ENCODE measurements at regions of chr6 and their contacts with region 1.

Region 1: GRCh38 chr6:52284460-52285176 is at the start of gene MCM3:
- DNase-seq: peak; percentile 86 to 99 (median 92)
- ATAC-seq: peak; percentile 92
- H3K4me3 ChIP-seq: peak within 1 kb of the TSS; percentile 57
- H3K4me3 Mint-ChIP-seq: peak within 1 kb of the TSS; percentile 60
- H3K27ac ChIP-seq: peak within 1 kb of the TSS; percentile 51 to 59
- H3K27ac Mint-ChIP-seq: peak within 1 kb of the TSS; percentile 34
- H3K4me1 ChIP-seq: peaks cover 29% of the 10 kb centered on the region
- H3K4me1 Mint-ChIP-seq: peaks cover 49% of the 10 kb centered on the region
- H3K27me3 ChIP-seq: no peaks in the 10 kb centered on the region
- H3K27me3 Mint-ChIP-seq: no peaks in the 10 kb centered on the region
- CTCF ChIP-seq: no peak
- total RNA-seq, gene MCM3: 9.3 to 10.1 TPM

Region 2: GRCh38 chr6:52299653-52300052 is 15.0 kb after region 1 on chr6:
- CTCF ChIA-PET with region 1: interaction called, 9 read pairs
- POLR2A ChIA-PET with region 1: interaction called, 16 read pairs
- intact Hi-C with region 1: loop called (anchors 2 kb)
- DNase-seq: no peak
- ATAC-seq: no peak
- H3K4me3 ChIP-seq: no peak overlapping the region
- H3K4me3 Mint-ChIP-seq: no peak overlapping the region
- H3K27ac ChIP-seq: no peak overlapping the region
- H3K27ac Mint-ChIP-seq: no peak overlapping the region
- H3K4me1 ChIP-seq: peaks cover 54% of the 10 kb centered on the region
- H3K4me1 Mint-ChIP-seq: peaks cover 66% of the 10 kb centered on the region
- H3K27me3 ChIP-seq: no peaks in the 10 kb centered on the region
- H3K27me3 Mint-ChIP-seq: no peaks in the 10 kb centered on the region
- CTCF ChIP-seq: no peak

Region 3: DNA sequence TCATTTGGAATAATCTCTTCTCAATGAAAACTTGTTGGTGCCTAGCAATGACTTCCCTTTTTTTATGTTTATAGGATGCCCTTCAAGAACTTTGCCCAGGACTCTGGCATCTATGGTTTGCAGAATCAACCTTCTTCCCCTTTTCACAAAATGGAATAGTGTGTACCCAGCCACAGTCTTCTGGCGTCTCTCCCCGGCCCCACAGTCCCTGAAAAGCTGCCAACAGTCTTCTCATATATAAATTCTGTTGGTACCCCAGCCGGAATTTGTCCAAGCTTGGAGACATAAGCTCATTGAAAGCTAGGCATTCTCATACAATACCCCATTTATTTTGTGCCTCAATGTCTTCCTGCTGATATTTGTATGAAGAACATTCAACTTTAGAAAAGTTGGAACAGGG is 26.3 kb after region 1 on chr6:
- CTCF ChIA-PET with region 1: interaction called, 7 read pairs
- POLR2A ChIA-PET with region 1: interaction called, 44 read pairs
- intact Hi-C with region 1: no loop called
- DNase-seq: no peak
- ATAC-seq: no peak
- H3K4me3 ChIP-seq: no peak overlapping the region
- H3K4me3 Mint-ChIP-seq: no peak overlapping the region
- H3K27ac ChIP-seq: no peak overlapping the region
- H3K27ac Mint-ChIP-seq: no peak overlapping the region
- H3K4me1 ChIP-seq: peaks cover 48% of the 10 kb centered on the region
- H3K4me1 Mint-ChIP-seq: peaks cover 63% of the 10 kb centered on the region
- H3K27me3 ChIP-seq: no peaks in the 10 kb centered on the region
- H3K27me3 Mint-ChIP-seq: no peaks in the 10 kb centered on the region
- CTCF ChIP-seq: no peak

Region 4: GRCh38 chr6:52389626-52390360 is 105.2 kb after region 1 on chr6:
- CTCF ChIA-PET with region 1: interaction called, 22 read pairs
- POLR2A ChIA-PET with region 1: interaction called, 75 read pairs
- intact Hi-C with region 1: no loop called
- DNase-seq: peak; percentile 32 to 87 (median 60)
- ATAC-seq: peak; percentile 45
- H3K4me3 ChIP-seq: peak overlapping the region; percentile 31
- H3K4me3 Mint-ChIP-seq: peak overlapping the region; percentile 87
- H3K27ac ChIP-seq: peak overlapping the region; percentile 63 to 91
- H3K27ac Mint-ChIP-seq: peak overlapping the region; percentile 97
- H3K4me1 ChIP-seq: peaks cover 59% of the 10 kb centered on the region
- H3K4me1 Mint-ChIP-seq: peaks cover 93% of the 10 kb centered on the region
- H3K27me3 ChIP-seq: no peaks in the 10 kb centered on the region
- H3K27me3 Mint-ChIP-seq: no peaks in the 10 kb centered on the region
- CTCF ChIP-seq: peak; percentile 53

Region 5: GRCh38 chr6:52407467-52407866 is 122.8 kb after region 1 on chr6:
- CTCF ChIA-PET with region 1: interaction called, 45 read pairs
- POLR2A ChIA-PET with region 1: interaction called, 3 read pairs
- intact Hi-C with region 1: no loop called
- DNase-seq: peak in 4 of 14 experiments; percentile 19 to 69 (median 61)
- ATAC-seq: peak; percentile 97
- H3K4me3 ChIP-seq: no peak overlapping the region
- H3K4me3 Mint-ChIP-seq: no peak overlapping the region
- H3K27ac ChIP-seq: no peak overlapping the region
- H3K27ac Mint-ChIP-seq: peak overlapping the region; percentile 81
- H3K4me1 ChIP-seq: peaks cover 11% of the 10 kb centered on the region
- H3K4me1 Mint-ChIP-seq: peaks cover 38% of the 10 kb centered on the region
- H3K27me3 ChIP-seq: no peaks in the 10 kb centered on the region
- H3K27me3 Mint-ChIP-seq: no peaks in the 10 kb centered on the region
- CTCF ChIP-seq: peak; percentile 57

Region 6: GRCh38 chr6:52577022-52577777 is 292.6 kb after region 1 on chr6 and contains the start of gene TRAM2:
- CTCF ChIA-PET with region 1: interaction called, 8 read pairs
- POLR2A ChIA-PET with region 1: interaction called, 26 read pairs
- intact Hi-C with region 1: loop called (anchors 2 kb)
- DNase-seq: peak; percentile 61 to 92 (median 75)
- ATAC-seq: peak; percentile 67
- H3K4me3 ChIP-seq: peak within 1 kb of the TSS; percentile 69
- H3K4me3 Mint-ChIP-seq: peak within 1 kb of the TSS; percentile 86
- H3K27ac ChIP-seq: peak within 1 kb of the TSS in 1 of 2 donors; percentile 60
- H3K27ac Mint-ChIP-seq: peak within 1 kb of the TSS; percentile 86
- H3K4me1 ChIP-seq: peaks cover 39% of the 10 kb centered on the region
- H3K4me1 Mint-ChIP-seq: peaks cover 56% of the 10 kb centered on the region
- H3K27me3 ChIP-seq: no peaks in the 10 kb centered on the region
- H3K27me3 Mint-ChIP-seq: no peaks in the 10 kb centered on the region
- CTCF ChIP-seq: no peak
- total RNA-seq, gene TRAM2: 7.1 to 7.6 TPM

Region 7: DNA sequence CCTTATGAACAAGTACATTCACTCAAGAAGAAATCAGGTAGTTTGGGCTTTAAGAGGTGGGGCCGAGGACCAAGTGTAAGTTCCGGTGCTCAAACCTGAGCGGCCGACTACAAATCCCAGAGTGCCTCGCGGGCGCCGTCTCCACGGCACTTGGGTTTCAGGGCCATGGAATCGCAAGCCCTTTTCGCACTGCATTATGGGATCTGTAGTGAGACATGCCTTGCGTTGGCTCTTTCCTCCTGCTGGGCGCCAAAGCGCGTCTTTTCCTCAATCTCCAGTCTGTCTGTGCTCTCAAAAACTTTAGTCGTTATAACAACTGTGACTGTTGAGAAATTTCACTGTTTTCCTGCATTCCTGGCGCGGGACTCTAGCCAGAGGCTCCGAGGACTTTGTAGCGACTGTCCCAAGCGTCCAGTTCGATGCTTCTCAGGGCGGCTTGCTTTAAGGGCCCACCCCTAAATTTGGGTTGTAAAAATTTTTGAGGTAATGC is 780.2 kb after region 1 on chr6:
- CTCF ChIA-PET with region 1: no interaction called
- POLR2A ChIA-PET with region 1: no interaction called
- intact Hi-C with region 1: loop called in 1 of 2 experiments (anchors 2 kb)
- DNase-seq: peak; percentile 90 to 98 (median 94)
- ATAC-seq: peak; percentile 86
- H3K4me3 ChIP-seq: peak overlapping the region; percentile 92
- H3K4me3 Mint-ChIP-seq: peak overlapping the region; percentile 97
- H3K27ac ChIP-seq: peak overlapping the region; percentile 68 to 84
- H3K27ac Mint-ChIP-seq: peak overlapping the region; percentile 92
- H3K4me1 ChIP-seq: peaks cover 36% of the 10 kb centered on the region
- H3K4me1 Mint-ChIP-seq: peaks cover 70% of the 10 kb centered on the region
- H3K27me3 ChIP-seq: no peaks in the 10 kb centered on the region
- H3K27me3 Mint-ChIP-seq: no peaks in the 10 kb centered on the region
- CTCF ChIP-seq: peak; percentile 14

Measured in CD4-positive, alpha-beta T cell (primary cell).